Caco-2 (cell line): ENCODE measurements at regions of chr5 and their contacts with region 1.

Region 1: DNA sequence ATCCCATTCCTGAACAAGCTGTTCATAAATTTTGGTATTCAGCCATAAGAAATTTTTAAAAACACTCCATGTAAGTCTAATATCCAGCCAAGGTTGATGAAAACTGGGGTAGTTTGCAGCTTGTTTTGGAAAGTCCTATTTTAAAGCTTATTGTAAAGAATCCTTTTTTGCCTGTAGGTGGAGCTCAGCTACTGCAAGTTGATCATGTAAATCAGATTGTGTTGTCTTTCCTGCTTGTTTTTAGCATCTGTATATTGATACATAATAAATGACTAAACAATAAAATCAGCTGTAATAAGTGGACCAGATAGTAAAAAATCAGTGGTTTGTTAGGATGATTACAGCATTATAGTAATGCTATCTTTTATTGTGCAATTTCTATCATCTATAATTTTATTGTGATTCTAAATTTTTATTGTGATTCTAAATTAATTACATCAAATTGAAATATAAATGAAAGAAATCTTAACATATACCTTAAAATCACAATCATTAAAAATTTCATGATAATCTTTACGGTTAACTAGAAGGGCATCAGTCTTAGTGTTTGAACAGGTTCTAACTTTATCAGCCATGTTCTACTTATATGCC is 42.4 kb downstream of the CWC27 start:
- DNase-seq: peak in 1 of 2 experiments; percentile 32
- H3K4me3 ChIP-seq: no peak overlapping the region
- H3K4me3 Mint-ChIP-seq: no peak overlapping the region
- H3K27ac Mint-ChIP-seq: no peak overlapping the region
- H3K4me1 ChIP-seq: no peaks in the 10 kb centered on the region
- H3K4me1 Mint-ChIP-seq: no peaks in the 10 kb centered on the region
- H3K27me3 ChIP-seq: no peaks in the 10 kb centered on the region
- H3K27me3 Mint-ChIP-seq: no peaks in the 10 kb centered on the region
- CTCF ChIP-seq: peak; percentile 58 to 68

Region 2: DNA sequence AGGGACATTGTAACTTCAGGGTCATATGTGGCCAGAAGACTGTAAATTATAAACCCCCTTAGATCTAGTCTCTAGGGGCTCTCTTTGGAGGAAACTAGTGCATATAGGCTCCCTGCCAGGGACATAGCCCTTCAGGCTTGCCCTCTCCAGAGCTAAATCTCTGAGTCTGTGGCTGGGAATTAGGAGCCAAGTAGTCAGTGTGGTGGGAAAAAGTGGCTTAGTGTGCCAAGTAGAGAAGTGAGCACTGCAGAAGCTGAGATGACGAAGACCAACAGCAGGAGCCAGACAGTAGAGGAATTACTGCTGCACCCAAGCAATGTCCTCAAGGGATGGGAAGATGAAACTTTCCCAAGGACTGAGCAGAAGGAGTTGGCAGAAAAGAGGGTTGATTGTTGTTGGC is 28.8 kb after region 1 on chr5:
- CTCF ChIA-PET with region 1: no interaction called
- POLR2A ChIA-PET with region 1: no interaction called
- intact Hi-C with region 1: no loop called
- DNase-seq: no peak
- H3K4me3 ChIP-seq: no peak overlapping the region
- H3K4me3 Mint-ChIP-seq: no peak overlapping the region
- H3K27ac Mint-ChIP-seq: no peak overlapping the region
- H3K4me1 ChIP-seq: no peaks in the 10 kb centered on the region
- H3K4me1 Mint-ChIP-seq: no peaks in the 10 kb centered on the region
- H3K27me3 ChIP-seq: no peaks in the 10 kb centered on the region
- H3K27me3 Mint-ChIP-seq: no peaks in the 10 kb centered on the region
- CTCF ChIP-seq: no peak

Region 3: DNA sequence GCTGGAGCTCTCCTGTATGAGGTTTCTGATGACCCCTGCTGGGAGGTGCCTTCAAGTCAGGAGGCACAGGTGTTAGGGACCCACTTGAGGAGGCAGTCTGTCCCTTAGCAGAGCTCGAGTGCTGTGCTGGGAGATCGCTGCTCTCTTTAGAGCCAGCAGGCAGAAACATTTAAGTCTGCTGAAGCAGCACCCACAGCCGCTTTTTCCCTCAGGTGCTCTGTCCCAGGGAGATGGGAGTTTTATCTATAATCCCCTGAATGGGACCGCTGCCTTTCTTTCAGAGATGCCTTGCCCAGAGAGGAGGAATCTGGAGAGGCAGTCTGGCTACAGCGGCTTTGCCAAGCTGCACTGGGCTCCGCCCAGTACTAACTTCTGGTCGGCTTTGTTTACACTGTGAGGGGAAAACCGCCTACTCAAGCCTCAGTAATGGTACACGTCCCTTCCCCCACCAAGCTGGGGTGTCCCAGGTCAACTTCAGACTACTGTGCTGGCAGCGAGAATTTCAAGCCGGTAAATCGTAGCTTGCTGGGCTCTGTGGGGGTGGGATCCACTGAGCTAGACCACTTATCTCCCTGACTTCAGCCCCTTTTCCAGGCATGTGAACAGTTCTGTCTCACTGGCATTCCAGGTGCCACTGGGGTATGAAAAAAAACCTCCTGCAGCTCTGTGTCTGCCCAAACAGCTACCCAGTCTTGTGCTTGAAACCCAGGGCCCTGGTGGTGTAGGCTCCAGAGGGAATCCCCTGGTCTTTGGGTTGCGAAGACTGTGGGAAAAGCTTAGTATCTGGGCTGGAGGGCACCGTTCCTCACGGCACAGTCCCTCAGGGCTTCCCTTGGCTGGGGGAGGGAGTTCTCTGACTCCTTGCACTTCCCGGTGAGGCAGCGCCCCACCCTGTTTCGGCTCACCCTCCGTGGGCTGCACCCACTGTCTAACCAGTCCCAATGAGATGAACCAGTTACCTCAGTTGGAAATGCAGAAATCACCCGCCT is 128.7 kb after region 1 on chr5:
- CTCF ChIA-PET with region 1: interaction called, 7 read pairs
- POLR2A ChIA-PET with region 1: no interaction called
- intact Hi-C with region 1: loop called (anchors 1 kb)
- DNase-seq: peak; percentile 15 to 38
- H3K4me3 ChIP-seq: no peak overlapping the region
- H3K4me3 Mint-ChIP-seq: no peak overlapping the region
- H3K27ac Mint-ChIP-seq: no peak overlapping the region
- H3K4me1 ChIP-seq: peaks cover 3% of the 10 kb centered on the region; the same call in 1 of the 2 replicates
- H3K4me1 Mint-ChIP-seq: peaks cover 3% of the 10 kb centered on the region
- H3K27me3 ChIP-seq: no peaks in the 10 kb centered on the region
- H3K27me3 Mint-ChIP-seq: no peaks in the 10 kb centered on the region
- CTCF ChIP-seq: no peak

Region 4: GRCh38 chr5:64958757-64959391 is 147.7 kb after region 1 on chr5:
- CTCF ChIA-PET with region 1: no interaction called
- POLR2A ChIA-PET with region 1: no interaction called
- intact Hi-C with region 1: loop called (anchors 5 kb)
- DNase-seq: no peak
- H3K4me3 ChIP-seq: no peak overlapping the region
- H3K4me3 Mint-ChIP-seq: no peak overlapping the region
- H3K27ac Mint-ChIP-seq: no peak overlapping the region
- H3K4me1 ChIP-seq: peaks cover 19% of the 10 kb centered on the region
- H3K4me1 Mint-ChIP-seq: peaks cover 13% of the 10 kb centered on the region
- H3K27me3 ChIP-seq: no peaks in the 10 kb centered on the region
- H3K27me3 Mint-ChIP-seq: no peaks in the 10 kb centered on the region
- CTCF ChIP-seq: peak; percentile 40 to 48

Region 5: DNA sequence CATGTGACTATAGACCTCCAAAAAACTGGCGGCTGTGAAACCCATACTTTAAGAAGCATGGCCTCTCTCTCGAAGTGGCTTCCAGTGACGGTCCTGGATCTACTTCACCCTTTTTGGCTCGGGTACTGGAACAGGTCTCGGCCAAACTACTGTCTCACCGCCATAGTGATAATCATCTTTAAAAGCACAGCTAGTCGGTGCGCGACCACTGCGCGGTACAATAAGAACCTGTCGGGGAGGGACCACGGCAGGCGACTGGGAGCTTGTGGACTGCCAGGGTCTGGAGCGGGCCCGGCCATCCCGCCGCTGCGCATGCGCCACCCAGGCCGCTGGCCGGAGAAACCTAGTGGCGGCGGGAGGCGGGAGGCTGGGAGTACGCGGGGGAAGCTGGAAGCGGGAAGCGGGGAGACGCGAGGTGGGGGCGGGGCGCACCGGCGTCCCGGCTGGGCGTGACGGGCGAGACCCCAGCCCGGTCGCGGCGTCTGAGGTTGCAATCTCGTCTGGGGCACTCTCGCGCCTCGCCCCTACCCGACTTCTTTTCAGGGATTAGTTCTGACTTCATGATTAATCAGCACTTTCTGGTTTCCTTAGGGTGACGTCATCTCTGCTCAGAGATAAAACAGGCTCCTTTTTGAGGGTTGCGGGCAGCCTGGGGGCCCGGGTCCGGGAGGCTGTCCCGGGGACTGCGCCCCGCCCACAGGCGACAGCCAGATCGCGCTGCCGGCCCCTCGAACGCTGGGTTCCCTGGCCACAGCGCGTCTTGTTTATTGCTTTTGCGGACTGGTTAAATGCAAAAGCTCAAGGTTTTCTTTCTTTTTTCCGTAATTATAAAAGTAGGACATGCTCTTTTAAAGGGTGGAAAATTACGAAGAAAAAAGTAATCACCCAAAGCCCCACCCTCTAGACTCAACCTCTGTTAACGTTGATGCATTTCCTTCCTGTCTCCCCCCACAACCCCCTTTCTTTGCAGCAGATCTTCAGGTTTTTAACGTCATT is 224.4 kb after region 1 on chr5:
- CTCF ChIA-PET with region 1: interaction called, 6 read pairs
- POLR2A ChIA-PET with region 1: no interaction called
- intact Hi-C with region 1: loop called (anchors 1 kb)
- DNase-seq: peak; percentile 92 to 96
- H3K4me3 ChIP-seq: peak overlapping the region; percentile 63
- H3K4me3 Mint-ChIP-seq: peak overlapping the region; percentile 79
- H3K27ac Mint-ChIP-seq: peak overlapping the region; percentile 84
- H3K4me1 ChIP-seq: peaks cover 7% of the 10 kb centered on the region; the same call in 1 of the 2 replicates
- H3K4me1 Mint-ChIP-seq: peaks cover 6% of the 10 kb centered on the region
- H3K27me3 ChIP-seq: no peaks in the 10 kb centered on the region
- H3K27me3 Mint-ChIP-seq: no peaks in the 10 kb centered on the region
- CTCF ChIP-seq: no peak

Region 6: DNA sequence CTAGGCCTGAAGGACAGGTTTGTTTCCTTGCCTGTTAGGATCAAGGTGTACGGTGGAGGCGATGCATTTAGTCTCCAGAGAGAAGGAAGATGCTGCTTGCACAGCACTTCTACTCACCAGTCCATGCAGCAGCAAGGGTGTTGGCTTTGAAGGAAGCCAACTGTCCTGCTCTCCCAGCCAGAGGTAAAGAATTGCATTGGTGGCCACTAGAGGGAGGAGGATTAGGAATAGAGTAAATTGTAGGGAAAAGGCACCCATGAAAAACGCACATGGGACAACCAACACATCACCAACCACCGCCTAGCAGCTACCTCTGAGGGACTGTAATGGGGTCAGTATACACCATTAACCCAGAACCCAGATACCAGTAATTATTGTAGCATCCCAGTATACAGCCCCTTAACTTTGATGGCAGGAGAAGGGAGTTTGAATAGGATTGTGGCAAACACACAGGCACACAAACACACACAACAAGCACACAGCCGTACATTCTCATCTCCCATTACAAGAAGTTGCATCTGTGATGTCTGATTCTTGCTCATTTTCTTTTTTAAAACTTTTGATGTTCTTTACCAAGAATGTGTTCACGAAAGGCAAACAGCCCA is 402.9 kb after region 1 on chr5:
- CTCF ChIA-PET with region 1: no interaction called
- POLR2A ChIA-PET with region 1: no interaction called
- intact Hi-C with region 1: loop called (anchors 1 kb)
- DNase-seq: peak; percentile 56 to 61
- H3K4me3 ChIP-seq: no peak overlapping the region
- H3K4me3 Mint-ChIP-seq: no peak overlapping the region
- H3K27ac Mint-ChIP-seq: no peak overlapping the region
- H3K4me1 ChIP-seq: no peaks in the 10 kb centered on the region
- H3K4me1 Mint-ChIP-seq: no peaks in the 10 kb centered on the region
- H3K27me3 ChIP-seq: no peaks in the 10 kb centered on the region
- H3K27me3 Mint-ChIP-seq: peaks cover 3% of the 10 kb centered on the region
- CTCF ChIP-seq: peak; percentile 62 to 69